ENCODE measurements at regions of chr13 and their contacts with region 1.

Region 1: GRCh38 chr13:26253787-26254582 is at the start of gene CDK8:
- DNase-seq: peak; percentile 88
- H3K4me3 Mint-ChIP-seq: peak within 1 kb of the TSS; percentile 85
- H3K27ac Mint-ChIP-seq: peak within 1 kb of the TSS; percentile 78
- H3K4me1 Mint-ChIP-seq: peaks cover 26% of the 10 kb centered on the region
- H3K27me3 Mint-ChIP-seq: no peaks in the 10 kb centered on the region
- total RNA-seq, gene CDK8: 13.7 to 13.9 TPM

Region 2: DNA sequence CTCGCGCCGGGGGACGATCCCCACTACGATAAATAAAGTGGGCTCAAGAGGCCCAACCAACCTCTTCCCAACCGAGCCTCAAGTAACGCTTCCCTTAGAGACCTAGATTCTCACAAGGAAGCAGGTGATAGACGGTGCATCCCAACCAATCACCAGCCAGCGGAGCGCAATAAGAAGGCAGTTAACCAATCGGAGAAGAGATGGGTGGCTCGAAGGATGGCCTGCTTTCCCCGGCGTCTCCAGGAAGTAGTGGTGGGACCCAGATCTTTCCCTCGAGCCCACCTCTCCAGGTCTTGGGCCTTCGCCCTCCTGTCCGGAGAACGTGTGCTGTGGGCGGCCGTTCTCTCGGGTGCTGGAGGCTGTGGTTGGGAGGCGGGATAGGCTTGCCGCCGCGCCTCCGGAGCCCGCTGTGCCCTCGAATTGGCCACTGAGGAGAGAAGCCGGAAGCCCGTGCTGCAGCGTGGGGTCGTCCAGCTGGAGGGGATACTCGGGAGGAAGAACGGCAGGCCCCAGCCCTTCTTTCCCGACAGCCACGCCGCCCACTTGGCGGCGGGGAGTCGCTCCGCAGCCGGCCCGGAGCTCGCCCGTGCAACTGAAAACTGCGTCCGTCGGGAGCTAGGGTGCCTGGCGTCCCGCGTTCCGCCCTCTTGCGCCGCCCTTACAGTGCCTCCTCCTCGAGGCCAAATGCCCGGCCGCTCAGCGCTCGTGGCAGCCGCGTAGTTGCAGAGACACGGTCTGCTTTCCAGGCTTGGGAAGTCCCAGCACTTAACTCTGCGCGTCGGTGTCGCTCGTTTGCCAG is 32.1 kb before region 1 on chr13 and contains the start of gene RNF6:
- CTCF ChIA-PET with region 1: no interaction called
- POLR2A ChIA-PET with region 1: interaction called, 43 read pairs
- DNase-seq: peak; percentile 90
- H3K4me3 Mint-ChIP-seq: peak within 1 kb of the TSS; percentile 94
- H3K27ac Mint-ChIP-seq: peak within 1 kb of the TSS; percentile 98
- H3K4me1 Mint-ChIP-seq: peaks cover 34% of the 10 kb centered on the region
- H3K27me3 Mint-ChIP-seq: no peaks in the 10 kb centered on the region
- total RNA-seq, gene RNF6: 40.7 to 44.6 TPM

Region 3: GRCh38 chr13:26266311-26266710 is 12.3 kb after region 1 on chr13:
- CTCF ChIA-PET with region 1: no interaction called
- POLR2A ChIA-PET with region 1: no interaction called
- DNase-seq: no peak
- H3K4me3 Mint-ChIP-seq: no peak overlapping the region
- H3K27ac Mint-ChIP-seq: no peak overlapping the region
- H3K4me1 Mint-ChIP-seq: no peaks in the 10 kb centered on the region
- H3K27me3 Mint-ChIP-seq: no peaks in the 10 kb centered on the region

Measured in activated CD4-positive, alpha-beta memory T cell treated with anti-CD3 and anti-CD28 coated beads, Interleukin-2, amount 10 ng/mL, durations not matched to agents 7 days and 5 days (primary cell).